Esophagus muscularis mucosa (tissue), 4 donors: ENCODE measurements at regions of chr14 and their contacts with region 1.

Region 1: GRCh38 chr14:52552063-52552988 is at the starts of genes GPR137C and TXNDC16:
- DNase-seq: peak; percentile 100
- H3K4me3 ChIP-seq: peak within 1 kb of the TSS; percentile 74 to 91 (median 82)
- H3K27ac ChIP-seq: peak within 1 kb of the TSS; percentile 86 to 96 (median 94)
- H3K4me1 ChIP-seq: peaks cover 17 to 28% (median 28%) of the 10 kb centered on the region in 4 donors
- H3K27me3 ChIP-seq: no peaks in the 10 kb centered on the region
- CTCF ChIP-seq: peak in 1 of 3 experiments; percentile 14
- EP300 ChIP-seq: no peak
- POLR2A ChIP-seq: peak; percentile 64
- total RNA-seq, gene GPR137C: 0.39 to 1.2 (median 0.45) TPM
- total RNA-seq, gene TXNDC16: 6.5 to 12.5 (median 11.8) TPM

Region 2: GRCh38 chr14:52527049-52527448 is 25.3 kb before region 1 on chr14:
- intact Hi-C with region 1: no loop called
- DNase-seq: no peak
- H3K4me3 ChIP-seq: no peak overlapping the region
- H3K27ac ChIP-seq: no peak overlapping the region
- H3K4me1 ChIP-seq: no peaks in the 10 kb centered on the region
- H3K27me3 ChIP-seq: no peaks in the 10 kb centered on the region
- CTCF ChIP-seq: no peak
- EP300 ChIP-seq: no peak
- POLR2A ChIP-seq: no peak

Region 3: DNA sequence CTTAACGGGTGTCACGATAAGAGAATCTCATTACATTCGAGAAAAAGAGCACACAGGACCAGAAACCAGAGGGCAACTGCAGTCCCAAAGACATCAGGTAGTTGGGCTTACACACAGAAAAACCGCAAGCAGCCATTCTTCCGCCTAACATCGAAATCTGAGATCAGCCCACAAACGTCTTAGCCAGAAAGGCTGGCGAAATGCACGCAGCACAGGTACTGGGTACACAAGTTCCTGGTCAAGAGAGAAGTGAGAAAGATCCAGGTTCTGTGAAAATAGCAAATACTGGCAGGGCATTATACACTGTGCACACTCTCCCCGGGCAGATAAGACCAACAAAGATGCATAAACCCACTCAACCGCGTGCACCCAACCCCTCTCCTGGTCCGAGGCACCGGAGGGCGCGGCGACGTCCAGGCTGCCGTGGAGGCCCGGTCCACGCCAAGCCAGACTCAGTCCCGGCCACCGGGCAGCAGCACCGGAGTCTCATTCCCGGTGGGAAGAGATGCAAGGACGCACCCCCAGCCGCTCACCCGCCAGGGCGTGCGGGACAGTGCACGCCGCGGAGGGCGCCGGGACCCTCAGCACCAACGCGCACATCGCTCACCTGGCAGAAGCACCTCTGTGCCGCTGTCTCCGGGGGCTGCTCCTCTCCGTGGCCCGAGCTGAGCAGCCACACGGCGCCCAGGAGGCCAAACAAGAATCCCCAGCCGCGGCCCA is 142.6 kb after region 1 on chr14:
- intact Hi-C with region 1: loop called (anchors 5 kb)
- DNase-seq: no peak
- H3K4me3 ChIP-seq: peak overlapping the region; percentile 76 to 94 (median 88)
- H3K27ac ChIP-seq: peak overlapping the region; percentile 96 to 99 (median 98)
- H3K4me1 ChIP-seq: peaks cover 11 to 46% (median 41%) of the 10 kb centered on the region in 4 donors
- H3K27me3 ChIP-seq: no peaks in the 10 kb centered on the region
- CTCF ChIP-seq: no peak
- EP300 ChIP-seq: no peak
- POLR2A ChIP-seq: no peak